Activated CD4-positive, alpha-beta T cell treated with anti-CD3 and anti-CD28 coated beads, Interleukin-2, amount 10 ng/mL, durations not matched to agents 24 days and 14 days (primary cell): ENCODE measurements at regions of chr7 and their contacts with region 1.

Region 1: DNA sequence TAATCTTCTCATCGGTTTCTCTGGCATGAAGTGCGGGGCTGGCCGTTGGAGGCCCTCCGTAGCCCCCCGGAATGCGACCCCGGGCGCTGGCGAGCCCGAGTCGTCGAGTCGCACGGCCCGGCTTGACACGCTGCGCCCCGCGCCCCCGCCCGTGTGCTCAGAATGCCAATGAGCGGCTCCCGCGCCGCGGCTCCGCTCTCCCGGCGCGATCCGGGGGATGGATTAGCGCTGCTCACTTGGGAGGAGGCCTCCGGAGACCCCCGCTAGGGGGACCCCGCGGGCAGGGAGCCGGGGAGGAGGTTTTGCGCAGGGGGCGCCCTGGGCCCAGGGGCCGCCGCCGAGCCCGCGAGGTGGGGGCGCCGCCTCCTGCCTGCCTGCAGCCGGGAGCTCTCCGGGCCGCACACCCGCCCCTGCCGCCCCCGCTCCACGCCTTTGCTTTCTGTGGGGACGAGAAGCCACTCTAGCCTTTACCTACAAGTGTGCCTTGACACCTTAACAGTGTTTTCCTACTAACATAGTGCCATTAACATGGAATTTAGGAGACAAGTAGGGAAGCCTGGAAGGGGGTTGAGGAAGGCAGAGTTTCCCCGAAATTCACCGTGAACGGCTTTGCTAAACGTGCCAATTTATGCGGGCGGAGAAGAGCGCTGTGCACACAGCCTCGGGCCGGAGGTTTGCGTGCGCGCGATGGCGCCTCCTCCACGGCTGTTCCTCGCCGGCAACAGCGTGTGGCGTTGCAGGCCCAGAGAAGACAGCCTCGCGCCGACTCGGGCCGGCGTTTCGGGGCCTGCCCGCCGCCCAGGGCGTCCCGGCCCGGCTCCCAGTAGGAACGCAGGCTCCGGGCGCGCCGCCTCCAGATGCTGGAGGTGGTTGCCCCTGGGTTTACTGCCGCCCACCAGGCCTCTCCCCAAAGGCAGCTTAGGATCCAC is 7.1 kb downstream of the SHH start:
- DNase-seq: peak; percentile 86
- H3K4me3 Mint-ChIP-seq: peak overlapping the region; percentile 62
- H3K27ac Mint-ChIP-seq: no peak overlapping the region
- H3K4me1 Mint-ChIP-seq: peaks cover 15% of the 10 kb centered on the region
- H3K27me3 Mint-ChIP-seq: peaks cover 58% of the 10 kb centered on the region

Region 2: DNA sequence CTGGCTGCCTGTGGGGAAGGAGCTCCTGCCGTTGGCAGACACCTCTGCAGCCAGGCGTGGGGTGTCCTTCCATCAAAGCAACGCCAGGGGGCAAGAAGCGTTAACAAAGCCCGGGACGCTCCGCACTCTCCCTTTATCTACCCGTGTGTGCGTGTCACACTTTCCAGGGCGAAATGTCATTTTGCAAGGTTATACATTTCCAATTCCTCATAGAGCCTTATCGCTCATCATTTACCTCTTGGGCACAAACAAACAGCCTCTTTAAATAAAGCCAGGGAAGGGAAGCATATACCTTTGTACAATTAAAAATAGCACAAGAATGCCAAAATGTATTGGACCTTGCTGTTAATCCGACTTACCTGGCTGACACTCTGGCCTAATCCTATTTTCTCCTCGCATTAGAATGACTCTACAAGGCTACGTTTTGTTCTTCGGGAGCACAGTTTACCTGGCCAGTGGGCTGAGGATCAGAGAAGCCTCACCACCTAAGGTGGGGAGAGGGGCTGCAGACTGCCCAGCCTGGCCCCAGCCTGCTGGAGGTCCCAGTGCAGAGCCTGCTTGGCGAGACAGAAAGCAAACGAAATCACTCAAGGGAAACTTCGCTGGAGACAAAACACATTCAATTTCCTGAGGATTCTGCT is 424.8 kb before region 1 on chr7:
- intact Hi-C with region 1: loop called (anchors 2 kb)
- DNase-seq: peak; percentile 88
- H3K4me3 Mint-ChIP-seq: no peak overlapping the region
- H3K27ac Mint-ChIP-seq: no peak overlapping the region
- H3K4me1 Mint-ChIP-seq: peaks cover 18% of the 10 kb centered on the region
- H3K27me3 Mint-ChIP-seq: peaks cover 75% of the 10 kb centered on the region

Region 3: GRCh38 chr7:155466814-155467733 is 338.1 kb before region 1 on chr7:
- intact Hi-C with region 1: loop called (anchors 2 kb)
- DNase-seq: peak; percentile 77
- H3K4me3 Mint-ChIP-seq: no peak overlapping the region
- H3K27ac Mint-ChIP-seq: no peak overlapping the region
- H3K4me1 Mint-ChIP-seq: peaks cover 7% of the 10 kb centered on the region
- H3K27me3 Mint-ChIP-seq: peaks cover 84% of the 10 kb centered on the region

Region 4: GRCh38 chr7:155490697-155491628 is 314.2 kb before region 1 on chr7:
- intact Hi-C with region 1: no loop called
- DNase-seq: peak; percentile 79
- H3K4me3 Mint-ChIP-seq: peak overlapping the region; percentile 73
- H3K27ac Mint-ChIP-seq: peak overlapping the region; percentile 67
- H3K4me1 Mint-ChIP-seq: peaks cover 16% of the 10 kb centered on the region
- H3K27me3 Mint-ChIP-seq: peaks cover 25% of the 10 kb centered on the region

Region 5: DNA sequence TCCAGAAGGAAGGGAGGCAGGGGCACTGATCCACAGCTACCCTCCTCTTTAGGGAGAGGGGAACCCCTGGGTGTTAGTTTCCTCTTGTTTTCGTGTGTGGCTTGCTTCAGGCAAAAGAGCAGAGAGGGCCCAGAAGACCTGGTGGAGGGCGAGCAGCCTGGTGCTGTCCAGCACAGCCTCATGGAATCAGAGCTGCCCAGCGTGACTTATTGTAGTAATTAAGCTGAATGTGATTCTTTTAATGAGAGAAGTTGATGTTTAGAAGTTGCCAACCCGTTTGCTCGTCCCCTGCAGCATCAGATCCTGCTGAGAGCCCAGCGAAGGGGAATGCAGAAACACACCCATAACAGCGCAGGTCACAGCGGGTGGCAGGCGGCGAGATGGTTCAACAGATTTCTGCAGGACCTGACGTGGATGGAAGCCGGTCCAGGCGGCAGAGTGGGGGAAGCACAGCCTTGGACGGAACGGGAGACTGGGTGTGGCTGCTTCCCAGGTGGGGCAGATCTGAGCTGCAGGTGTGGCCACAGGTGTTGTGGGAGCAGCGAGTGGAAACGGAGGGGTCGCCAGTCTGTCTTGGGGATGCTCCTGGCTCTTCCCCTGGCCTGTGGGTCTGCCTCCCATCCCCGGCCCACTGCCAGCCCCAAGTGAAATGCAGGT is 60.8 kb after region 1 on chr7:
- intact Hi-C with region 1: no loop called
- DNase-seq: no peak
- H3K4me3 Mint-ChIP-seq: no peak overlapping the region
- H3K27ac Mint-ChIP-seq: no peak overlapping the region
- H3K4me1 Mint-ChIP-seq: no peaks in the 10 kb centered on the region
- H3K27me3 Mint-ChIP-seq: no peaks in the 10 kb centered on the region

Region 6: GRCh38 chr7:156612930-156613329 is 807.8 kb after region 1 on chr7:
- intact Hi-C with region 1: loop called (anchors 10 kb)
- DNase-seq: peak; percentile 95
- H3K4me3 Mint-ChIP-seq: peak overlapping the region; percentile 70
- H3K27ac Mint-ChIP-seq: peak overlapping the region; percentile 68
- H3K4me1 Mint-ChIP-seq: peaks cover 43% of the 10 kb centered on the region
- H3K27me3 Mint-ChIP-seq: peaks cover 67% of the 10 kb centered on the region

Region 7: GRCh38 chr7:157022681-157023588 is 1217.8 kb after region 1 on chr7:
- intact Hi-C with region 1: loop called (anchors 5 kb)
- DNase-seq: no peak
- H3K4me3 Mint-ChIP-seq: no peak overlapping the region
- H3K27ac Mint-ChIP-seq: no peak overlapping the region
- H3K4me1 Mint-ChIP-seq: peaks cover 2% of the 10 kb centered on the region
- H3K27me3 Mint-ChIP-seq: peaks cover 73% of the 10 kb centered on the region